Heart right ventricle (tissue), 16 donors: ENCODE measurements at regions of chr11 and their contacts with region 1.

Region 1: DNA sequence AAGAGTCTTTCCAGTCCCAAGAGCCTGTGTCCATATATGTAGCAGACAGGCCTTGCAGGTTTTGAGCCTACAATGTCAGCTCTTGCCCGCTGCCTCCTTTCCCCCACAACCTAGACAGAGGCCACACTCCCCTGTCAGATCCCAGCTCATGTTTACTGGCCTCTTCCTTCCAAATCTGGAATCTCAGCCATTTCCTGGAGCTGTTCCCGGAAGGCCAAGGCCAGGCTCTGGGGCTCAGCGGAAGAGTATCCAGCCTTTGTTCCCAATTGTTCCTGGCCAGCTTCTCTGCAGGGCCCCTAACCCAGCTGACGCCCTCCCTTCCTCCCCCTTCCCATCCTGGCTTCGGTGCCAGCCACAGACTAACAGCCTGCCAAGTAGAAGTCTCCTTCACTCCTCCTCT is 1.0 kb upstream of the ROBO4 start:
- DNase-seq: peak; percentile 59 to 73
- ATAC-seq: peak; percentile 55 to 80 (median 64)
- H3K4me3 ChIP-seq: peak overlapping the region in 4 of 10 donors; percentile 55 to 65 (median 60)
- H3K27ac ChIP-seq: peak overlapping the region; percentile 82 to 95 (median 88)
- H3K4me1 ChIP-seq: peaks cover 11 to 72% (median 53%) of the 10 kb centered on the region in 9 donors
- H3K27me3 ChIP-seq: peaks cover 0 to 19% (median 0%) of the 10 kb centered on the region in 7 donors
- CTCF ChIP-seq: no peak

Region 2: GRCh38 chr11:124543145-124543544 is 355.6 kb before region 1 on chr11:
- intact Hi-C with region 1: no loop called
- DNase-seq: no peak
- ATAC-seq: no peak
- H3K4me3 ChIP-seq: no peak overlapping the region
- H3K27ac ChIP-seq: no peak overlapping the region
- H3K4me1 ChIP-seq: no peaks in the 10 kb centered on the region
- H3K27me3 ChIP-seq: no peaks in the 10 kb centered on the region
- CTCF ChIP-seq: no peak

Region 3: GRCh38 chr11:124682443-124682842 is 216.3 kb before region 1 on chr11:
- intact Hi-C with region 1: no loop called
- DNase-seq: no peak
- ATAC-seq: no peak
- H3K4me3 ChIP-seq: no peak overlapping the region
- H3K27ac ChIP-seq: no peak overlapping the region
- H3K4me1 ChIP-seq: peaks cover 0 to 1% (median 0%) of the 10 kb centered on the region in 9 donors
- H3K27me3 ChIP-seq: no peaks in the 10 kb centered on the region
- CTCF ChIP-seq: no peak

Region 4: DNA sequence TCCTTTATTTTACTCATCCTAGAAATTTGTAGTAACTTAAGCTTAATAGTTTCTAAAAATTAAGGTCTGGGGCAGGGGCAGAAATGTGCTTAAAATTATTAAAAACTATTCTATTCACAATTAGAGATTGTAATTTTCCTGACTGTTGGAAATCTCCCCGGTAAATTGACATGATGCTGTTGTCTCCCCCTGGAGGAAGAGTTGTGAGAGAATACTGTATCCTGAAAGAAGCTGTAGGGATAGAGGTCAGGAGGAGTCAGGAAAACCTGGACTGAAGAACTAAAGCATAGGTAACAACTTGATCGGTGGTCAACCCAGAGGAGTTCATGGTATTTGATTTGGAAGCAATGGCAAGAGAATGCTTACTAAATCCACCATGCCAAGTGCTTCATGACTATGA is 120.4 kb before region 1 on chr11:
- intact Hi-C with region 1: no loop called
- DNase-seq: no peak
- ATAC-seq: no peak
- H3K4me3 ChIP-seq: no peak overlapping the region
- H3K27ac ChIP-seq: no peak overlapping the region
- H3K4me1 ChIP-seq: peaks cover 0 to 3% (median 0%) of the 10 kb centered on the region in 9 donors
- H3K27me3 ChIP-seq: no peaks in the 10 kb centered on the region
- CTCF ChIP-seq: peak in 3 of 9 donors; percentile 15 to 24 (median 18)

Region 5: GRCh38 chr11:124875943-124876817 is 22.5 kb before region 1 on chr11:
- intact Hi-C with region 1: loop called in 1 of 10 experiments (anchors 2 kb)
- DNase-seq: peak; percentile 87 to 89
- ATAC-seq: peak; percentile 89 to 93 (median 90)
- H3K4me3 ChIP-seq: peak overlapping the region; percentile 36 to 72 (median 66)
- H3K27ac ChIP-seq: peak overlapping the region; percentile 10 to 96 (median 90)
- H3K4me1 ChIP-seq: peaks cover 3 to 44% (median 23%) of the 10 kb centered on the region in 9 donors
- H3K27me3 ChIP-seq: peaks cover 0 to 66% (median 40%) of the 10 kb centered on the region in 7 donors
- CTCF ChIP-seq: peak; percentile 53 to 94 (median 73)